Activated T-helper 1 cell treated with anti-CD3 and anti-CD28 coated beads, Interleukin-12 subunit alpha, Interleukin-12 subunit beta, Interleukin-2, Interleukin-4 antibody, amounts not matched to agents 30 ng/mL and 10 ng/mL and 1 ng/mL, durations not matched to agents 14 hours and 24 hours and 36 hours (primary cell): ENCODE measurements at regions of chr5 and their contacts with region 1.

Region 1: GRCh38 chr5:19370644-19371386 is 617.2 kb downstream of the CDH18 start:
- DNase-seq: no peak
- H3K4me3 Mint-ChIP-seq: no peak overlapping the region
- H3K27ac Mint-ChIP-seq: no peak overlapping the region
- H3K4me1 Mint-ChIP-seq: no peaks in the 10 kb centered on the region
- H3K27me3 Mint-ChIP-seq: no peaks in the 10 kb centered on the region

Region 2: DNA sequence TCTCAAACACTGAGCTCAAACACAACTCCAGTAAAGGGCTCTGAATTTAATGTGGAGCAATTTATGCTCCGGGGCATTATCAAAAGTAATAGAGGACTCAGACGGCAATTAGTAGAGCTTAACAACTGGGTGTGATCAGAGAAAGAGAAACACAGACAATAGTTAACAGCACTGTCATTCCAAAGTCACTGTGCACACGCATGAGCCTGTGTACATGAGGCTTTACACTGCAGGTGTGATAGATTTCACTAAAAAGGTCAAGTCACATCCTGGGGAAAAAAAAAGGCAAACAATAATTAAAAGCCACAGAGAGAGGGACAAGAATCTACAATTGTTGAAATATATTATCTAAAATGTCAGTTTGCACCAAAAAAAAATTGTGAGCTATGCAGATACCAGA is 339.3 kb before region 1 on chr5:
- intact Hi-C with region 1: no loop called
- DNase-seq: no peak
- H3K4me3 Mint-ChIP-seq: no peak overlapping the region
- H3K27ac Mint-ChIP-seq: no peak overlapping the region
- H3K4me1 Mint-ChIP-seq: no peaks in the 10 kb centered on the region
- H3K27me3 Mint-ChIP-seq: no peaks in the 10 kb centered on the region

Region 3: DNA sequence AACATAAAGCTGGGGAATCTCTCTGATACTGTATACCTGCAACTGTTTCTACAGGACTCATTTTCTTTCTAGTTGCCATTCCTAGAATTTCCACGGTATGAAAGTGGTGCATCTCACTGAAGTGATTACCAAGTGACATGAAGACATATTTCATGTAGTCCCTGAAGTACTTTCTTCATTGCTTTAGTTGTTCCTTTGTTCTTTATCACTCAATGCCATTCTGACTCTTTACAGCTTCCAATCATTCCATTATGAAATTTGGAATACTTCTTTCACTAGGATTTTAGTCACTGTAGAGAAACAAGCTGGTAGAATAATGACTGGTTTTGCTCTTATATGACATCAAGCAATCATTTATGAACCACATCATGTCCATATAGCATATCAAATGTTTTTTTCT is 27.9 kb before region 1 on chr5:
- intact Hi-C with region 1: loop called (anchors 1 kb)
- DNase-seq: no peak
- H3K4me3 Mint-ChIP-seq: no peak overlapping the region
- H3K27ac Mint-ChIP-seq: no peak overlapping the region
- H3K4me1 Mint-ChIP-seq: no peaks in the 10 kb centered on the region
- H3K27me3 Mint-ChIP-seq: no peaks in the 10 kb centered on the region